PC-9 (cell line): ENCODE measurements at regions of chr3 and their contacts with region 1.

Region 1: DNA sequence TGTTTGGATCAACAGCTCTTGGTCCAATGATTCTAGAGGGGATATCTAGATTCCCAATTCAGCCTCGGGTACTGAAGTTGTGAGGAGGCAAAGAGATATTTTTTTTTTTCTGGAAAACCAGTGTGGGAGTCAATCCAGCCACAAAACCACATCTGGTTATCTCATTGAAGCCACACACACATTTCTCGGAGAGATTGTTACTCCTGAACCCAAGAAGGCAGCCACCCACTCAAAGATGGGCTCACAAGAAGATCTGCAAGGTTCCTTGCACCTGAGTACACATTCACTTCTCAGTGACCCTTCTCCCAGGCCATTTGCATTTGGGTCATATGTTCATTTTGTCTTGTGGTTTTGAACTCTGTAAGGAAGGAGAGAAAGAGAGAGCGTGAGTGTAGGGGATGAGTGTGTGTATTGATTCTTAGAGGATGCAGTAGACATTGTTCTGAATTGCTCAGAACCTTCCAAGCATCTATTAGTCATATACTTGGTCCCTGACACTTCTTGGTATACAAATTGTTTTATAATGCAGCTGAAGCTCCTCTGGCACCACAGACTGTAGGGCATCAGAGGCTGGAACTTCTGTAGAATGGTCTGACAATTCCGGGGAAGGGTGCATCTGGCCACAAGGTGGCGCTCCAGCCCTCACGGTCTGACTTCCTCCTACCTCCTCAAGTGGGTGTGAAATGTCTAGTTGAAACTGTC is 39.3 kb upstream of the TRA2B start:
- DNase-seq: peak; percentile 59 to 81
- H3K4me3 ChIP-seq: no peak overlapping the region
- H3K27ac ChIP-seq: no peak overlapping the region
- H3K4me1 ChIP-seq: no peaks in the 10 kb centered on the region
- H3K27me3 ChIP-seq: no peaks in the 10 kb centered on the region
- CTCF ChIP-seq: peak; percentile 98

Region 2: DNA sequence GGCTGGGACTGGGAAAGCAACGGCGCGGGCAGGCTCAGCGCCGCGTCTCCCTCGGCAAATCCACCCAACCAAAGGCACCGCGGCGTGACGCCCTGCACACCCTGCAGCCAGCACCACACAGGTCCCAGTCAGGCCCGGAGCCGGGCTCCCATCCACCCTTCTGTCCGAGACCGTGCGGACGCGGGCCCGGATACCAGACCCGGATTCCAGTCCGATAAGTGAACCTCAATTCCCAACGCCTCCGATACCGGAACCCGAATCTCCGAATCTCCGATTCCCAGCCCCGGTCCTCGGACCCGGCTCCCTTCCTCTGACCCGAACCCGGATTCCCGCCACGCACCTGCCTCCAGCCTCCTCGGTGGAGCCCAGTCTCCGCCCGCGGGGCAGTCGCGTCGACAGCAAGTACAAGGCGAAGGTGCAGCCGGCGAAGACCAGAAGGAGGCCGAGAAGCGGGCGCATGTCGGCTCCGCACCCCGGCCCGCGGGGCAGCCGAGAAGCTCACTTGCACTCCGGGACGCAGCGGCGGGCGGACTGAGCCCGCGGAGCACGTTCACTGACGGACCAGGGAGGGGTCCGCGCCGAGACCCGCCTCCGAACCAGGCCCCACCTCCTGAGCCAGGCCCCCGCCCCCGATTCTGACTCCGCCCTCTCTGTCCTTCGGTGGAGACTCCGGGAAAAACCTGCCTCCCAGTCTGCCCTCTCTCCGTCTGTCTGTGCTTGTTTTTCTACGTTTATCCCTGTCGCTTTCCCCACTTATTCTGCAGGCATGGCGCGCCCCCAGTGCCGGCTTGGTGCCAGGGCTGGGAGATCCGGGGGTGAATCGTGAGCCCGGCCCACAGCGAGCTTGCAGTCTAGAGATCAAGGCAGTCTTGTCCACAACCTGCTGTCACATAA is 478.4 kb before region 1 on chr3 and contains the start of gene TMEM41A:
- CTCF ChIA-PET with region 1: no interaction called
- POLR2A ChIA-PET with region 1: no interaction called
- intact Hi-C with region 1: no loop called
- DNase-seq: peak; percentile 81 to 98
- H3K4me3 ChIP-seq: peak within 1 kb of the TSS; percentile 78
- H3K27ac ChIP-seq: peak within 1 kb of the TSS; percentile 74
- H3K4me1 ChIP-seq: peaks cover 11% of the 10 kb centered on the region
- H3K27me3 ChIP-seq: no peaks in the 10 kb centered on the region
- CTCF ChIP-seq: 0 out of 2 replicates have a peak, but pooled peaks have one; percentile 17
- total RNA-seq, gene TMEM41A: 37.2 and 54.1 TPM in 2 replicates

Region 3: GRCh38 chr3:186060222-186060621 is 83.1 kb after region 1 on chr3:
- CTCF ChIA-PET with region 1: interaction called, 18 read pairs
- POLR2A ChIA-PET with region 1: no interaction called
- intact Hi-C with region 1: no loop called
- DNase-seq: no peak
- H3K4me3 ChIP-seq: no peak overlapping the region
- H3K27ac ChIP-seq: no peak overlapping the region
- H3K4me1 ChIP-seq: no peaks in the 10 kb centered on the region
- H3K27me3 ChIP-seq: no peaks in the 10 kb centered on the region
- CTCF ChIP-seq: no peak

Region 4: DNA sequence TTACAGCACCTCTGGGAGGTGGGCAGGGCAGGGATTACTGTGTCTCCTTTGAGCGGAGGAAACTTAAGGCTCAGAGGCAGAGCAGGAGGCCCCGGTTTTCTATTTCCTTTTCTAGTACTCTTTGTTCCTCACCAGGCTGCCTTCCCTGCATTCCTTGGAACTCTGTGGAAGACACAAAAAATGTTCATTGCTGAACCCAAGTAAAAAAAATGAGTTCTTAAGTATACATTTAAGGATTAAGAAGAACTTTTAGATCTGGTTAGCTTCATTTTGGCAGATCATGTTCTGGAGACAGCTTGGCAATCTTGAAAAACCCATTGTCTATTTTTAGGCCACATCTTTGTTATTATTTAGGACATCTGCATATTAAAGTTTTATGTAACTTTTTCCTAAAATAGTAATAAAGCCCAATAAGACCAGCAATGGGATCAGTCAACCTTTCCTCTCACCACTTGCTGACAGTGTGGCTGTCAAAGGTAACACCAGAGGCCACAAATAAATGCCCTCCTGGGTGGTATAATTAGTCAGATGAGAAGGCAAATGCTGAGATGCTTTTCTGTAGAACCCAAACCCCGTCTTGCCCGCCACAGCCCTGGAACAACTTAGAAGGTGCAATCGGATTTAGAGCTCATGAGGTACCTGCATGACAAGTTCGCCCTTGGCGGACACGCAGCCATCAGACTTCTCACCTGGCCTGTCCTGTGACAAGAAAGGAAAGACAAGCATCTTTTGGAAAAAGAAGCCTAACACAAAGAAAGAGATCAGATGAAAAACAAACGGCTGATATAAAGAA is 287.7 kb after region 1 on chr3:
- CTCF ChIA-PET with region 1: interaction called, 15 read pairs
- POLR2A ChIA-PET with region 1: no interaction called
- intact Hi-C with region 1: no loop called
- DNase-seq: no peak
- H3K4me3 ChIP-seq: no peak overlapping the region
- H3K27ac ChIP-seq: no peak overlapping the region
- H3K4me1 ChIP-seq: peaks cover 5% of the 10 kb centered on the region; the same call in 1 of the 2 replicates
- H3K27me3 ChIP-seq: peaks cover 49% of the 10 kb centered on the region
- CTCF ChIP-seq: no peak